Dorsolateral prefrontal cortex (tissue), 120 donors: ENCODE measurements at regions of chr2 and their contacts with region 1.

Region 1: DNA sequence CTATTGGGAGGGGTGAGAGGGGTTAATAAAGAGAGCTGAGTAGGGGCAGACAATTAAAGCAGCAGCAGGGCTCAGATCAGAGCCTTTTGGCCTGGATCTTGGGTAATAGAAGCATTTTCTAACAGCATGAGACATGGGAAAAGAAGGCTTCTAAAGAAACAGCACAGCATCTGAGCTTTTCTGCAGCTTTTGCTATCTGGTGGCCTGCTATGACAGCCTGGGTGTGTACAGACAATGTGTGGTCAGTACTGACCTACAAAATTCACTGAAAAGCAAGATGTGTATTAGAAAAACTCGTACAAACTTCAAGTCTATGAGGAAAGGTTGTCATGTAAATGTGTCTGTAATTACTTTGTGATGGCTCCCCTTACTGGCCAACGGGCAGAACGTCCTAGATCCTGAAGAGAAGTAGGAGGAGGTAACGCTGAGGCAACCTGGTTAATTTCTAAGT is 95.6 kb downstream of the GALNT3 start:
- DNase-seq: peak in 6 of 10 donors; percentile 16 to 66 (median 50)
- H3K4me3 ChIP-seq: no peak overlapping the region
- H3K27ac ChIP-seq: peak overlapping the region in 10 of 59 donors; percentile 0 to 61 (median 16)
- H3K27me3 ChIP-seq: no peaks in the 10 kb centered on the region
- CTCF ChIP-seq: peak in 55 of 56 donors; percentile 16 to 72 (median 57)

Region 2: DNA sequence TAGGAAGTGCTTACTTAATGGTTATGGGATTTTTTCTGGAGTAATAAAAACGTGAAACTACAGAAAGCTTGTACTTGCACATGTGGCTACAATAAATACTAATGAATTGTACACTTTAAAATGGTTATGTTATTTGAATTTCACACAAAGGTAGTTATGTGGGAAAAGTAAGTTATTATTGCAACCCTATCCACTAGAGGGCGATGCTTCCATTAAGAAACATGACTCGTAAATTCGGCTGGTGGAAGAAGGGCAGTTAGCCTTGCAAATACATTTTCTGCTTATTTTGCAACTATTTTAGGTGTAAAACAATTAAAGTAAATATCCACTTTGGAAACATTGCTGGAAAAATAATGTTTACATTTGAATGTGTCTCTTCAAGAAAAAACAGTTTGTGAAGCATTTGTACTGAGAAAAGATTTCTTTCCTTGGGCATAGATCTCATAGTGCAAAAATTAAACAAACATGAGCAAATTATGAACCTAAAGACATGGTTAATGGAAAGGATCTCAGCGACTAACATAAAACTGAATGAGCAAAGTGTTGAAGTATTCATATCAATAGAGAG is 297.1 kb before region 1 on chr2:
- intact Hi-C with region 1: loop called (anchors 5 kb)
- DNase-seq: peak in 1 of 10 donors; percentile 16
- H3K4me3 ChIP-seq: peak overlapping the region in 5 of 59 donors; percentile 9 to 23 (median 16)
- H3K27ac ChIP-seq: no peak overlapping the region
- H3K27me3 ChIP-seq: no peaks in the 10 kb centered on the region
- CTCF ChIP-seq: peak; percentile 56 to 92 (median 82)

Region 3: GRCh38 chr2:165469417-165469816 is 229.1 kb before region 1 on chr2 and contains the start of gene CSRNP3:
- intact Hi-C with region 1: loop called (anchors 10 kb)
- DNase-seq: peak; percentile 21 to 86 (median 77)
- H3K4me3 ChIP-seq: peak within 1 kb of the TSS; percentile 35 to 77 (median 62)
- H3K27ac ChIP-seq: peak within 1 kb of the TSS in 49 of 59 donors; percentile 8 to 81 (median 57)
- H3K27me3 ChIP-seq: no peaks in the 10 kb centered on the region
- CTCF ChIP-seq: peak in 20 of 56 donors; percentile 7 to 49 (median 30)
- total RNA-seq, gene CSRNP3: 36.6 to 164 (median 108) TPM

Region 4: GRCh38 chr2:165558832-165559231 is 139.6 kb before region 1 on chr2:
- intact Hi-C with region 1: loop called (anchors 5 to 10 kb)
- DNase-seq: no peak
- H3K4me3 ChIP-seq: no peak overlapping the region
- H3K27ac ChIP-seq: no peak overlapping the region
- H3K27me3 ChIP-seq: no peaks in the 10 kb centered on the region
- CTCF ChIP-seq: peak in 46 of 56 donors; percentile 9 to 71 (median 43)

Region 5: DNA sequence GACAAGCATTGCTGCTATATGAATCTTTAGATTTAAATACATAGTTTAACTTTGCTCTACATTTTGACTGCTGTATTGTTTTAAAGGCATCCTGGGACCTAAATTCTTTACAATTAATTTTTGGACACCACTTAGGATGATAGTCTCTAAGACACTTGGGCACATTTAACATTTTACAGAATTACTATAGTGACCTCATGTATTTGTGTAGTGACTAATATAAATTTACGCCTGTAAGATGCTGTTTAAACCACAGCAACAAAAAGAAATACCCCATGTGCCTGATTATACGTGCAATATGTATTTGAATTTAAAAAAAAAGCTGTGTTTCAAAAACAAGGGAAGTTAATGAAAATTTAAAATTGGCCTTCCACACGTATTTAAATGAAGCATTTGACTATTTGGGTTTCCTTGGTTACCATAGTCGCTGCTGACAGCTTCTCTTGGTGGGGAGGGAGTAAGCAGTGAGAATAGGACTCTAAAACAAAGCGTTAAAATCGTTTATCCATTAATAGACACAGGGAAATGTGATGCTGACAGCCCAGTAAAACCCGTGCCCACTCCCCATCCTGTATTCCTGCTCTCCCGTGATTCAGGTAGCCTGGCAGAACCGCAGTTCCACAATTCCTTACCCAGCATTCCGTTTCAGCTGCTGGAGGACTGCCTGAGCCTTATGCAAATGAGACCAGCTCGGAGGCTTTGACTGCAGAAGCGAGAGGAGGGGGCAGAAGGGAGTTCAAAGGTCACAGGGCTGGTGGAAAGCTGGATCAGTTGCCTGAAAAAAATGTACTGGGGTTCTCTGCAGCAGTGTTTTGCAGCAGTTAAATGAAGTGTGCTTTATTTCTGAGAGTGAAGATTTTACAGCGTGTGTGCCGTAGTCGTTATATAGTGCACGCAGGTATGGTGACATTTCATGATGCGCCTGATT is 124.7 kb before region 1 on chr2:
- intact Hi-C with region 1: loop called in 1 of 2 experiments (anchors 5 kb)
- DNase-seq: peak; percentile 32 to 80 (median 76)
- H3K4me3 ChIP-seq: peak overlapping the region; percentile 37 to 76 (median 63)
- H3K27ac ChIP-seq: peak overlapping the region in 58 of 59 donors; percentile 5 to 88 (median 74)
- H3K27me3 ChIP-seq: no peaks in the 10 kb centered on the region
- CTCF ChIP-seq: peak in 1 of 56 donors; percentile 7

Region 6: DNA sequence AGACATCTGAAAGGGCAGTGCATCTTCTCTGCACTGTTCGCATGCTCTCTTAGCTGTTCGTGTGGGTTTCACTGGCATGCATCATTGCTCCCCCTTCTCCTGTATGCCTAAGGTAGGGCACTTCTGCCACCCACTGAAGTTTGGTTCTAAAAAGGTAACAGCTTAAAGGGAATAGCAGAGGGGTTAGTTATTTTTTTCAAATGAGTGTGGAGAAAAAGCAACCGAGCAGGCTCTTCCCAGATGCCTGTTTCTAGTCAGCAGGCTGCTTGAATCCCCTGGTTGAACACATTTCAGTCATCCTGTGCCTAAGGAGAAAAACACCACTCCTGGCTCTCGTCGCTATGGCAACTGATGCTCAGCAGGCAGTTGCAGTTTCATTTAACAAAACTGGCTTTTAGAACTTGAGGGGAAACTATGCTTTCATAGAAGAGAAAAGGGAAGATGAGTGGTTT is 165.4 kb after region 1 on chr2:
- intact Hi-C with region 1: loop called in 1 of 2 experiments (anchors 10 kb)
- DNase-seq: peak in 8 of 10 donors; percentile 22 to 73 (median 47)
- H3K4me3 ChIP-seq: peak overlapping the region in 35 of 59 donors; percentile 3 to 51 (median 30)
- H3K27ac ChIP-seq: peak overlapping the region in 51 of 59 donors; percentile 3 to 80 (median 56)
- H3K27me3 ChIP-seq: no peaks in the 10 kb centered on the region
- CTCF ChIP-seq: no peak